ENCODE measurements at regions of chr10 and their contacts with region 1.

Region 1: DNA sequence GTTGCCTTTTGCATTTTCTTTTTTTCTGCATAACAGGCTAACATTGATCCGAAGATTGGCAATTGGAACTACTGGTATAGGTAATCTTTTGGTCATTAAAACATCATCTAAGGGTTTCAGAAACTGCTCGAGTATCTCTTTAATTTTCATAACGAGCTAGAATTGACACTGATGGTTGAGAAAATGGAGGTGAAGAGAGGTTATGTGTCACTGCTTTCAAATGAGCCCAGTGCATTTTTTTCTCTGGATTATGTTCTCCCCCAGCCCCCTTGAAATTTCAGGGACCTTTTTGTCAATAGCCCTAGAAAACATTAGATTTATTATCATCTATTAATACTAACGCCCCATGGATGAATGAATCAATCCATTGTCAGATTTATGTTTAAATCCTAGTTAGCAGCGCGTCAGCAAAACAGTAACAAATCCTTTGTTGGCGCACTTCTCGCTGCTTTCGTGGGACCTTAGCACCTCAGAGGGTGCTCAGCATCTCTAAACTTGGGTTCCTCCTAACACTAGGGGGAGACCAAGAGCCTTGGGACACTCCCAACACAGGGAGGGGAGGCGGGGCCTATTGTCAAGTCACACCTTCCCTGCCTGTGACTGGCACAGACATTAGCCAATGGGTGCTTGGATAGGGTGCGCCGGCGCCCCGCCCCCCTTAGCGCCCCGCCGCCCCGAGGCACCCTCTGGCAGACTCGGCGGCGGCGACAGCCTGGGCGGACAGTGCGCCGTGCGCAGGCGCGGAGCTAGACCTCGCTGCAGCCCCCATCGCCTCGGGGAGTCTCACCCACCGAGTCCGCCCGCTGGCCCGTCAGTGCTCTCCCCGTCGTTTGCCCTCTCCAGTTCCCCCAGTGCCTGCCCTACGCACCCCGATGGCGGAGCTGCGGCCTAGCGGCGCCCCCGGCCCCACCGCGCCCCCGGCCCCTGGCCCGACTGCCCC is at the start of gene SUFU:
- DNase-seq: peak; percentile 94 to 100 (median 98)
- ATAC-seq: peak; percentile 69
- H3K4me3 ChIP-seq: peak within 1 kb of the TSS; percentile 85 to 89
- H3K4me3 Mint-ChIP-seq: no peak within 1 kb of the TSS
- H3K27ac ChIP-seq: peak within 1 kb of the TSS; percentile 30 to 89
- H3K27ac Mint-ChIP-seq: peak within 1 kb of the TSS; percentile 88
- H3K4me1 ChIP-seq: peaks cover 28% of the 10 kb centered on the region
- H3K4me1 Mint-ChIP-seq: peaks cover 44% of the 10 kb centered on the region
- H3K27me3 ChIP-seq: no peaks in the 10 kb centered on the region
- H3K27me3 Mint-ChIP-seq: no peaks in the 10 kb centered on the region
- CTCF ChIP-seq: peak; percentile 75
- total RNA-seq, gene SUFU: 3.9 to 4.2 TPM

Region 2: GRCh38 chr10:101818119-101818871 is 685.3 kb before region 1 on chr10 and contains the start of gene OGA:
- CTCF ChIA-PET with region 1: no interaction called
- POLR2A ChIA-PET with region 1: no interaction called
- intact Hi-C with region 1: loop called in 1 of 2 experiments (anchors 5 kb)
- DNase-seq: peak; percentile 94 to 100 (median 98)
- ATAC-seq: peak; percentile 90
- H3K4me3 ChIP-seq: peak within 1 kb of the TSS; percentile 78 to 82
- H3K4me3 Mint-ChIP-seq: peak within 1 kb of the TSS; percentile 98
- H3K27ac ChIP-seq: peak within 1 kb of the TSS; percentile 81 to 90
- H3K27ac Mint-ChIP-seq: peak within 1 kb of the TSS; percentile 97
- H3K4me1 ChIP-seq: peaks cover 32% of the 10 kb centered on the region
- H3K4me1 Mint-ChIP-seq: peaks cover 51% of the 10 kb centered on the region
- H3K27me3 ChIP-seq: no peaks in the 10 kb centered on the region
- H3K27me3 Mint-ChIP-seq: no peaks in the 10 kb centered on the region
- CTCF ChIP-seq: no peak
- total RNA-seq, gene OGA: 356 to 394 TPM

Region 3: GRCh38 chr10:102151774-102152544 is 351.6 kb before region 1 on chr10 and contains the start of gene NOLC1:
- CTCF ChIA-PET with region 1: no interaction called
- POLR2A ChIA-PET with region 1: interaction called, 3 read pairs
- intact Hi-C with region 1: loop called (anchors 1 kb)
- DNase-seq: peak; percentile 99 to 100 (median 100)
- ATAC-seq: peak; percentile 93
- H3K4me3 ChIP-seq: peak within 1 kb of the TSS; percentile 80 to 92
- H3K4me3 Mint-ChIP-seq: peak within 1 kb of the TSS; percentile 89
- H3K27ac ChIP-seq: peak within 1 kb of the TSS; percentile 93 to 95
- H3K27ac Mint-ChIP-seq: peak within 1 kb of the TSS; percentile 90
- H3K4me1 ChIP-seq: peaks cover 27% of the 10 kb centered on the region
- H3K4me1 Mint-ChIP-seq: peaks cover 41% of the 10 kb centered on the region
- H3K27me3 ChIP-seq: no peaks in the 10 kb centered on the region
- H3K27me3 Mint-ChIP-seq: no peaks in the 10 kb centered on the region
- CTCF ChIP-seq: no peak
- total RNA-seq, gene NOLC1: 39.5 to 42.0 TPM

Region 4: DNA sequence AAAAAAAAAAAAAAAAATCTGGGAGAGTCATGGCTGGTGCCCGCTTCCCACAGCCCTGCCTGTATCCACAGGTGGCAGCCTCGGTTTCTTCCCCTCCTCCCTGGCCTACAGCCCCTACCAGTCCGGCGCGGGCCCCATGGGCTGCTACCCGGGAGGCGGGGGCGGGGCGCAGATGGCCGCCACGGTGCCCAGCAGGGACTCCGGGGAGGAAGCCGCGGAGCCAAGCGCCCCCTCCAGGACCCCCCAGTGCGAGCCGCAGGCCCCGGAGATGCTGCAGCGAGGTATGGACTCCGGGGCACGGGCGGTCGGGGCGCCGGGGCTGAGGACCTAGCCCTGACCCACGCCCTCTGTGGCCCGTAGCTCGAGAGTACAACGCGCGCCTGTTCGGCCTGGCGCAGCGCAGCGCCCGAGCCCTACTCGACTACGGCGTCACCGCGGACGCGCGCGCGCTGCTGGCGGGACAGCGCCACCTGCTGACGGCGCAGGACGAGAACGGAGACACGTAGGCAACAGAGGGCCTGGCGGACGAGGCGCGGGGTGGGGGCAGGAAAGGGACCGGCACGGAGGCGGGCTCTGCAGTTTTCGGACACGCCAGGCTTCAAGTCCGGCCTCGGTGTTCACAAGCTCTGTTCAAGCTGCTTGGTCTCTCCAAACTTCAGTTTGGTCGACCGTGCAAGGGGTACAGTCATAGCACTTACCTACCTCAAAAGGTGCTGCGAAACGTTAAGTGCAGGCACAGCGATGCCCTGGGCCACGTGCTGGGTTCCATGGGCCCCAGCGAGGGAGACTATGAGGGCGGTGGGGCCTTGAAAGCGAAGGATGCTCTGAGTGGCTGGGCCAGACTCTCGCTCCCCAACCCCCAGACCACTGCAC is 104.1 kb before region 1 on chr10:
- CTCF ChIA-PET with region 1: interaction called, 4 read pairs
- POLR2A ChIA-PET with region 1: interaction called, 7 read pairs
- intact Hi-C with region 1: loop called (anchors 1 kb)
- DNase-seq: peak; percentile 78 to 95 (median 87)
- ATAC-seq: peak; percentile 51
- H3K4me3 ChIP-seq: peak overlapping the region; percentile 44 to 65
- H3K4me3 Mint-ChIP-seq: peak overlapping the region; percentile 76
- H3K27ac ChIP-seq: peak overlapping the region; percentile 59 to 86
- H3K27ac Mint-ChIP-seq: peak overlapping the region; percentile 81
- H3K4me1 ChIP-seq: peaks cover 30% of the 10 kb centered on the region
- H3K4me1 Mint-ChIP-seq: peaks cover 38% of the 10 kb centered on the region
- H3K27me3 ChIP-seq: no peaks in the 10 kb centered on the region
- H3K27me3 Mint-ChIP-seq: no peaks in the 10 kb centered on the region
- CTCF ChIP-seq: peak; percentile 89

Region 5: DNA sequence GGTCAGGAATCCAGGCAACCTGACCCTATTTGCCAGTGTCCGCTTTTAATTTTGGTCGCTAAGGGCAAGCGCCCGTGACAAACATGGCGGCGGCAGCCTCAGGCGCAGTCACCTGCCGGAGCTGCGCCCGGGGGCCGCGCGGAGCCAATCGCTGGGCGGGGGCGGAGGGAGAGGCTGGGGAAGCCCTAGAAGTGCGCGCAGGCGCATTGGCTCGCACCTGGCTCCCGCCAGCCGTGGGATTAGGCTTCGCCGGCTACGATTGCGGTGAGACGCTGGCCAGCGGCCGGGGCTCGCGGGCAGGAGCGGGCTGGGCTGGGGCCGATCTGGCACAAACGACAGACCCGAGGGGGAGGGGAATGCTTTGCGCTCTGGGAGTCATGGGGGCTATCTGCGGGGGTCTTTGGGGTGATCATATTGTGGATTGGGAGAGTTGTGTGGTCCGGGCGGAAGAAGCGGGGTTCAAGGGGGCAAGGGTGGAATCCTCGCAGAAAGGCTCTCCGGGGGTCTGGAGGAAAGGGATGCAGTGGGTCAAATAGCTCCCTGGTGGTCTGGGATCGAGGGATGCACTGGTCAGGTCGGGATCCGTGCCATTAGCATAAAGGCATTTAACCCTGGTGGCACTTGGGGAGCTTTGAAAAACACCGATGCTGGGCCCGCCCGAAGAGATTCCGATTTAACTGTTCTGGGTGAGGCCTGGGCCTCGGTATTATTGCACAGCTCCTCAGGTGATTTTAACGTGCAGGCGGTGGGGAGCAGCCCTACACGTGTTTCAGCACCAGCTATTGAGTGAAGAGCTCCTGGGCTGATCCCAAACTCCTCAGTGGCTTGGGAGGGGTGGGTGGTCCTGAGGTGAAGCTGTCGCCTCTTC is 42.1 kb before region 1 on chr10:
- CTCF ChIA-PET with region 1: no interaction called
- POLR2A ChIA-PET with region 1: interaction called, 4 read pairs
- intact Hi-C with region 1: loop called (anchors 1 kb)
- DNase-seq: peak; percentile 85 to 96 (median 93)
- ATAC-seq: peak; percentile 99
- H3K4me3 ChIP-seq: peak overlapping the region; percentile 67 to 76
- H3K4me3 Mint-ChIP-seq: peak overlapping the region; percentile 89
- H3K27ac ChIP-seq: peak overlapping the region in 1 of 2 experiments; percentile 59
- H3K27ac Mint-ChIP-seq: peak overlapping the region; percentile 79
- H3K4me1 ChIP-seq: peaks cover 20% of the 10 kb centered on the region
- H3K4me1 Mint-ChIP-seq: peaks cover 35% of the 10 kb centered on the region
- H3K27me3 ChIP-seq: no peaks in the 10 kb centered on the region
- H3K27me3 Mint-ChIP-seq: no peaks in the 10 kb centered on the region
- CTCF ChIP-seq: no peak

Region 6: DNA sequence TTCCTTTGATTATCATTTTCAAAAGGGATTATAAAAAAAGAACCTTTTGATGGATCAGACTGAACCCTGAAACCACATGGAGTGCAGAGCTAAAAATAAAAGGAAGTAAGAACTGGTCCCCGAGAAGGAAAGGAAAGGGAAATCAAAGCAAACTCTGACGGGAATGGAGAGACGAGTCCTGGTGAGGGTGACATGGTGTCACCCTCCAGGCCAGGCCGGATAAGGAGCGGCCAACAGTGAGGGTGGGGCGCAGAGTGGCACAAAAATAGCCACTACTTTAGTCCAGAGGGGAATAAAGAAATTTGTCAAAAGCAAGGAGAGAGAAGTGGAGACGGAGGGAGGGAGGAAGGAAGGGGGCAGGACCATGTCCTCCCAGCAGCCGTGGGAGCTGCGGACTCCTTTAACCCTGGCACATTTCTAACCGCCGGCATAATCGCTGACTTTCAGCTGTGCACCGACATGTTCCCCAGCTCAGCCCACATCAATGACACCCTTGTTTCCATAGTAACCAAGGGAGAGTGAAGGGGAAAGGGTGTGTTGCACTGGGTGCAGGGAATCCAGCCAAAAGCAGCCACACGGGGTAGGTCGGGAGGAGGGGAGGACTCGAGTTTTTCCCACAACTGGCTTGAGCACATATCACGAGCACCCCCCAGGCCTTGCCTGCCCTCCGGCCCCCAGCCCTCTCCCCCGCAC is 170.4 kb after region 1 on chr10:
- CTCF ChIA-PET with region 1: interaction called, 3 read pairs
- POLR2A ChIA-PET with region 1: no interaction called
- intact Hi-C with region 1: loop called in 1 of 2 experiments (anchors 1 kb)
- DNase-seq: peak; percentile 33 to 92 (median 72)
- ATAC-seq: peak; percentile 88
- H3K4me3 ChIP-seq: peak overlapping the region; percentile 32 to 47
- H3K4me3 Mint-ChIP-seq: peak overlapping the region; percentile 78
- H3K27ac ChIP-seq: peak overlapping the region; percentile 58 to 68
- H3K27ac Mint-ChIP-seq: peak overlapping the region; percentile 86
- H3K4me1 ChIP-seq: peaks cover 41% of the 10 kb centered on the region
- H3K4me1 Mint-ChIP-seq: peaks cover 58% of the 10 kb centered on the region
- H3K27me3 ChIP-seq: no peaks in the 10 kb centered on the region
- H3K27me3 Mint-ChIP-seq: no peaks in the 10 kb centered on the region
- CTCF ChIP-seq: no peak

Region 7: DNA sequence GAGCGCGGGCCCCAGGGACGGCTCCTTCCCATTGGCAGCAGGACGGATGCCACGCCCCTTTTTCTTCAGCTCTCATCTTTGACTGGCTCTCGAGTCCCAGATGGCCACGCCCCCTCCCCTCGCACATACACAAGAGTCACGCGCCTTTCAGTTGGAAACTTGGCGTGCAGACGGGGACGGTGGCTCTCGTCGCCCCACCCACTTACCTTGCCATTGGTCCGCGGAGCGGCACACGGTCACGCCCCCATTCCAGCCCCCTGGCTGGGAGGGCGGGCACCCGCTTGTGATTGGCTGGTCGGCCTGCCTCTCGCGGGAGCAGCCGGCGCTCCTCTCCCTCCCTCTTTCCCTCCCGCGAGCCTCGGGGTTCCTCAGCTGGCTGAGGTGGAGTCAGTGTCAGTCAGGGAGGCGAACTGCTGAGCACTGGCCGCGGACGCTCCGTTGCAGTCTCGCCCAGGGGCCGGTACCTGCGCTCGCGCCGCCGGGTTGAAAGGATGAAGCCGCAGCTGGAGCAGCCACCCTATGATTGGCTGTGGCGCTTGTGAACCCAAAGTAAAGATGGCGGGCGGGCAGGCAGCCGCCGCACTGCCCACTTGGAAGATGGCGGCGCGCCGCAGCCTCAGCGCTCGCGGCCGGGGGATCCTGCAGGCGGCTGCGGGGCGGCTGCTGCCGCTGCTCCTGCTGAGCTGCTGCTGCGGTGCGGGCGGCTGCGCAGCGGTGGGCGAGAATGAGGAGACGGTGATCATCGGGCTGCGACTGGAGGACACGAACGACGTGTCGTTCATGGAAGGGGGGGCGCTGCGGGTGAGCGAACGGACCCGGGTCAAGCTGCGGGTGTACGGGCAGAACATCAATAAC is 414.6 kb after region 1 on chr10 and contains the start of gene CNNM2:
- CTCF ChIA-PET with region 1: no interaction called
- POLR2A ChIA-PET with region 1: no interaction called
- intact Hi-C with region 1: loop called in 1 of 2 experiments (anchors 5 kb)
- DNase-seq: peak; percentile 99 to 100 (median 100)
- ATAC-seq: peak; percentile 89
- H3K4me3 ChIP-seq: peak within 1 kb of the TSS; percentile 95 to 99
- H3K4me3 Mint-ChIP-seq: peak within 1 kb of the TSS; percentile 96
- H3K27ac ChIP-seq: peak within 1 kb of the TSS; percentile 84 to 94
- H3K27ac Mint-ChIP-seq: peak within 1 kb of the TSS; percentile 95
- H3K4me1 ChIP-seq: peaks cover 44% of the 10 kb centered on the region
- H3K4me1 Mint-ChIP-seq: peaks cover 55% of the 10 kb centered on the region
- H3K27me3 ChIP-seq: peaks cover 0 to 2% of the 10 kb centered on the region in 2 experiments
- H3K27me3 Mint-ChIP-seq: peaks cover 9% of the 10 kb centered on the region
- CTCF ChIP-seq: no peak
- total RNA-seq, gene CNNM2: 9.5 to 9.6 TPM

Region 8: GRCh38 chr10:103709341-103709920 is 1205.9 kb after region 1 on chr10:
- CTCF ChIA-PET with region 1: no interaction called
- POLR2A ChIA-PET with region 1: no interaction called
- intact Hi-C with region 1: no loop called
- DNase-seq: no peak
- ATAC-seq: no peak
- H3K4me3 ChIP-seq: no peak overlapping the region
- H3K4me3 Mint-ChIP-seq: no peak overlapping the region
- H3K27ac ChIP-seq: no peak overlapping the region
- H3K27ac Mint-ChIP-seq: no peak overlapping the region
- H3K4me1 ChIP-seq: no peaks in the 10 kb centered on the region
- H3K4me1 Mint-ChIP-seq: no peaks in the 10 kb centered on the region
- H3K27me3 ChIP-seq: no peaks in the 10 kb centered on the region
- H3K27me3 Mint-ChIP-seq: no peaks in the 10 kb centered on the region
- CTCF ChIP-seq: no peak